K562 (cell line): ENCODE measurements at regions of chr12 and their contacts with region 1.

Region 1: DNA sequence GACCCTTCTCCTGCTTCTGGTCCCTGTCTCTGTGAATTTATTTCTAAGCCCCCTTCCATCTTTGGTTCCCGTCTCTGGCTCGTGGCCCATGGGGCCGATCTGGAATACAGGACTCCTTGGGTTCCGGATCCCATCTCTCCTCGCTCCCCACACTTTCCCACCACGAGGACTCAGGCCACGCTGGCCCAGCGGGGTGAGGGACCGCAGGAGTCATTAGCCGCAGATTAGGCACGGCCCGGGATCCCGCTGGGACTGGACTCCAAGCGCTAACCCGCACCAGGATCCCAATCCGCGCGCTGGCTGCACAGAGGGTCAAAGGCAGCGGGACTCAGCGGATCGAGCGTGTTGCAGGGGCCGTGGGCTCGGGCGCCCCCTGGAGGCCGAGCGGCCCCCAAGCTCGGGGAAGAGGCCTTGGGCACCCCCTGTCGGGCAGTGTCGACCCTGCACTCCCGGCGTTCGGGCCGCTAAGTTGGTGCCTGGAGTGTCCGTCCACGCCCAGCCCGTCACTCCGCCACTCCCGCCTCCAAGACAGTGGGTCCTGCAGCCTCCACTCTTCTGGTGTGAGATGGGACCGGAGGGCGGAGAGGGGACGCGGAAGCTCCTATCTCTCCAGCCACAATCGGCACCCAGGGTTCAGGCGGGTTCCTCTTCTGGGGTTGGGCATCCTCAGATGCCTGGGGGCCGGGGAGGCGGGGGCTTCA is 9.5 kb downstream of the SHMT2 start:
- DNase-seq: peak; percentile 90 to 96 (median 93)
- ATAC-seq: peak; percentile 63
- H3K4me3 ChIP-seq: peak overlapping the region; percentile 46
- H3K27ac ChIP-seq: no peak overlapping the region; the same call in 2 of the 3 replicates
- H3K4me1 ChIP-seq: peaks cover 48 to 87% of the 10 kb centered on the region in 2 experiments
- H3K27me3 ChIP-seq: peaks cover 2 to 23% of the 10 kb centered on the region in 2 experiments; a peak in 3 of 5 replicates
- CTCF ChIP-seq: peak; percentile 100
- EP300 ChIP-seq: peak; percentile 6; the same call in 1 of the 2 replicates
- POLR2A ChIP-seq: no peak
- RAD21 ChIP-seq: peak; percentile 98

Region 2: GRCh38 chr12:57078519-57079404 is 160.2 kb before region 1 on chr12 and contains the start of gene NEMP1:
- CTCF ChIA-PET with region 1: no interaction called
- POLR2A ChIA-PET with region 1: no interaction called
- in situ Hi-C with region 1: no loop called
- intact Hi-C with region 1: loop called (anchors 5 kb)
- DNase-seq: peak; percentile 96 to 99 (median 96)
- ATAC-seq: peak; percentile 98
- H3K4me3 ChIP-seq: peak within 1 kb of the TSS; percentile 95
- H3K27ac ChIP-seq: peak within 1 kb of the TSS; percentile 98
- H3K4me1 ChIP-seq: peaks cover 11 to 13% of the 10 kb centered on the region in 2 experiments; a peak in 4 of 5 replicates
- H3K27me3 ChIP-seq: no peaks in the 10 kb centered on the region
- CTCF ChIP-seq: no peak
- EP300 ChIP-seq: no peak
- POLR2A ChIP-seq: peak; percentile 94
- RAD21 ChIP-seq: no peak
- polyA plus RNA-seq, gene NEMP1: 9.5 to 15.6 TPM

Region 3: GRCh38 chr12:57124259-57124877 is 114.6 kb before region 1 on chr12:
- CTCF ChIA-PET with region 1: no interaction called
- POLR2A ChIA-PET with region 1: no interaction called
- in situ Hi-C with region 1: no loop called
- intact Hi-C with region 1: loop called (anchors 10 kb)
- DNase-seq: peak; percentile 73 to 84 (median 76)
- ATAC-seq: peak; percentile 61
- H3K4me3 ChIP-seq: no peak overlapping the region
- H3K27ac ChIP-seq: no peak overlapping the region
- H3K4me1 ChIP-seq: peaks cover 10 to 25% of the 10 kb centered on the region in 2 experiments
- H3K27me3 ChIP-seq: no peaks in the 10 kb centered on the region
- CTCF ChIP-seq: peak; percentile 88 to 92 (median 91)
- EP300 ChIP-seq: no peak
- POLR2A ChIP-seq: no peak
- RAD21 ChIP-seq: peak; percentile 77 to 82

Region 4: GRCh38 chr12:57195611-57196371 is 43.2 kb before region 1 on chr12:
- CTCF ChIA-PET with region 1: no interaction called
- POLR2A ChIA-PET with region 1: interaction called, 4 read pairs
- in situ Hi-C with region 1: no loop called
- intact Hi-C with region 1: loop called (anchors 5 kb)
- DNase-seq: peak in 3 of 4 experiments; percentile 43 to 47 (median 46)
- ATAC-seq: peak; percentile 79
- H3K4me3 ChIP-seq: no peak overlapping the region
- H3K27ac ChIP-seq: no peak overlapping the region
- H3K4me1 ChIP-seq: peaks cover 0 to 67% of the 10 kb centered on the region in 2 experiments; a peak in 2 of 5 replicates
- H3K27me3 ChIP-seq: peaks cover 65 to 98% of the 10 kb centered on the region in 2 experiments; a peak in 4 of 5 replicates
- CTCF ChIP-seq: peak; percentile 29 to 59 (median 32); a peak in 4 of 6 replicates
- EP300 ChIP-seq: no peak
- POLR2A ChIP-seq: no peak
- RAD21 ChIP-seq: peak in 1 of 2 experiments; percentile 31; a peak in 1 of 4 replicates

Region 5: DNA sequence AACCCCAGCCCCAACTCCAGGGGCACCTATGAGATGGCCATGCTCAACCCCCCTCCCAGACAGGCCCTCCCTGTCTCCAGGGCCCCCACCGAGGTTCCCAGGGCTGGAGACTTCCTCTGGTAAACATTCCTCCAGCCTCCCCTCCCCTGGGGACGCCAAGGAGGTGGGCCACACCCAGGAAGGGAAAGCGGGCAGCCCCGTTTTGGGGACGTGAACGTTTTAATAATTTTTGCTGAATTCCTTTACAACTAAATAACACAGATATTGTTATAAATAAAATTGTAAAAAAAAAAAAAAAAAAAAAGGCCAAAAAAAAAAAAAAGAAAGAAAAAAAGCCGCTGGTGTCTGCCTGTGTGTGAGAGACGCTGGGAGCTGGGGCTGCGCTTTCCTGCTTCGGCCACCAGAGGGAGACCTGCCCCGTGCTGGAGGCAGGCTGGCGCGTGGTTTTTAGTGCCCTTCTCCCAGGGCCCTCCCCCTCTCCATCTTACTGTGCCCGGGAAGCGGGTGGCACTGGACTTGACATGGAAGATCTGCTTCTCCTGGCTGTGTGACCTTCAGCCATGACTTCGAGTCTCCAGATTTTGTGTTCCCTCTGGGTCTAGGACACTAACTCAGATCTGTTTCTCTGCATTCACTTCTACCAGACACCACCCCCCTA is 25.8 kb before region 1 on chr12:
- CTCF ChIA-PET with region 1: interaction called, 186 read pairs
- POLR2A ChIA-PET with region 1: interaction called, 9 read pairs
- in situ Hi-C with region 1: loop called (anchors 5 kb)
- intact Hi-C with region 1: loop called (anchors 1 kb)
- DNase-seq: peak; percentile 84 to 94 (median 90)
- ATAC-seq: peak; percentile 81
- H3K4me3 ChIP-seq: no peak overlapping the region
- H3K27ac ChIP-seq: no peak overlapping the region
- H3K4me1 ChIP-seq: peaks cover 17 to 56% of the 10 kb centered on the region in 2 experiments; a peak in 4 of 5 replicates
- H3K27me3 ChIP-seq: peaks cover 24 to 71% of the 10 kb centered on the region in 2 experiments; a peak in 4 of 5 replicates
- CTCF ChIP-seq: peak; percentile 89 to 97 (median 92)
- EP300 ChIP-seq: no peak
- POLR2A ChIP-seq: no peak
- RAD21 ChIP-seq: peak; percentile 78 to 85

Region 6: DNA sequence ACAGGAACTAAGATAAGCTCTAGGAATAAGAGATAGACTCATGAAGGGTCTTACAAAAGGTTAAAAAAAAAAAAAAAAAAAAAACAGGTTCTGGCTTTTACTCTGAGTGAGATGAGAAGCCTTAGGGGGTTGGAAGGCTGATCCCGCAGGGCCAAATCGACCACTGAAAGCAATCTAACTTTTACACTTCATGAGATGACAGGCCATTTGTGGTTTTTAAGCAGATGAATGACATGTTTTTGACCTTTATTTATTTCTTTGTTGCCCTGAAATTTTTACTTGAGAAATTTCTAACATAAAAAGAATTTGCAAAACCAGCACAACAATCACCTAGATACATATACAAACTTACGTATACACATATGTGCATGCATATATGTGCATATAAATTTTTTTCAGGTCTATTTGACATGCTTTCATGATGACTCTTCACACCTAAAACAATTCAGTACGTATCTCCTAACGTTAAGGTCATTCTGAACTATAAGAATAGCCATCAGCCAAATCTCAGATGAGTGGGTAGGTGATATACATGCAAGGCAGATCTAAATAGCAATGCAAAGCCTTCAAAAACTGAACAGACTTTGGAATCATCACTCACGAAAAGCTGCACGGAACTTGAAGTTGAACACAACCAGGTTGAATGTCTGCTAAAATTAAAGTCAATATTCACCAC is 104.8 kb after region 1 on chr12:
- CTCF ChIA-PET with region 1: no interaction called
- POLR2A ChIA-PET with region 1: no interaction called
- in situ Hi-C with region 1: no loop called
- intact Hi-C with region 1: no loop called
- DNase-seq: no peak
- ATAC-seq: no peak
- H3K4me3 ChIP-seq: no peak overlapping the region
- H3K27ac ChIP-seq: no peak overlapping the region
- H3K4me1 ChIP-seq: peaks cover 4 to 17% of the 10 kb centered on the region in 2 experiments
- H3K27me3 ChIP-seq: no peaks in the 10 kb centered on the region
- CTCF ChIP-seq: no peak
- EP300 ChIP-seq: no peak
- POLR2A ChIP-seq: no peak
- RAD21 ChIP-seq: no peak